RWPE1 (cell line): ENCODE measurements at regions of chr5 and their contacts with region 1.

Region 1: GRCh38 chr5:59673438-59674058 is 220.0 kb downstream of the PDE4D start:
- DNase-seq: peak; percentile 48
- H3K27ac ChIP-seq: no peak overlapping the region
- CTCF ChIP-seq: peak; percentile 93

Region 2: DNA sequence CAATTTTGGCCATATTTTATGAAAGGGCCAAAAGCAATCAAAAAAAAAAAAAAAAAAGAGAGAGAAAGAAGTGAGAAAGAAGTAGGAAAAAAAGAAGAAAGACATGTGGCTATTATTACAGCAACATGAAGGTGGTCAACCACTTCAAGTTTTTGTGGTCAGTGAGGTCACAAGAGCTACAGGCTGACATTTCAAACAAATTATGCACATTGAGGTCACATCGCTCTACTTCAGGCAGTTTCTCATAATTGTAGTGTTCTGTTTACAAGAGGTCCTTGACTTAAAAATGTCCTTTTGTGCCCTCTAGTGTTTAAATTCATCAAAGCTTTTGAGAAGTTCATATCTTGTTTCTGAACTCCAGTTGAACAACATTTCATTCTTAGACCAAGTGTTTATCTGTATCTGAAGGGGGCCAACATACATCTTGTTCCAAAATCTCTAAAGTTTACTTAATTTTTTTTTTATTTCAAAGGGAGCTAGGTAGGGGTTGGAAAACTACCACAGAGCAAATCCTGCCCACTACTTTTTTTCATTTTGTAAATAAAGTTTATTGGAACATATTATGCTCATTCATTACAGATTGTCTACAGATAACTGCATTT is 293.1 kb before region 1 on chr5:
- CTCF ChIA-PET with region 1: interaction called, 12 read pairs
- POLR2A ChIA-PET with region 1: no interaction called
- DNase-seq: peak; percentile 42
- H3K27ac ChIP-seq: no peak overlapping the region
- CTCF ChIP-seq: peak; percentile 71

Region 3: DNA sequence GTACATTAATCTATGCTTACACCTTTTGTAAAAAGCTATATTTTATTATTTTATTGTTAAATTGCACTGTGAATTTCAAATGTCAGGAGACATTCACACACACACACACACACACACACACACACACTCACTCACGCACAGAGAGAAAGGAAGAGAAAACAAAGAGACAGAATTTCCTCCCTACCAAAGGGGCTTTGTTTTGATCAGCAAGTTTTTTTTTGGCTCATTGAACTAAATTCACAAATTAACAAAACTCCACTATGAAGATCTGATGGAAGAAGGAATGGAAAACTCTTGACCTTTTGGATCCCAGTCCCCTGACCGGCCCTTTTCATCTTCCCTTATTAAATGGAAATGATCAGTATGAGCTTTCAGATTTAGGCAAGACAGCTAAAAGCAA is 58.8 kb after region 1 on chr5:
- CTCF ChIA-PET with region 1: no interaction called
- POLR2A ChIA-PET with region 1: no interaction called
- DNase-seq: no peak
- H3K27ac ChIP-seq: no peak overlapping the region
- CTCF ChIP-seq: no peak

Region 4: DNA sequence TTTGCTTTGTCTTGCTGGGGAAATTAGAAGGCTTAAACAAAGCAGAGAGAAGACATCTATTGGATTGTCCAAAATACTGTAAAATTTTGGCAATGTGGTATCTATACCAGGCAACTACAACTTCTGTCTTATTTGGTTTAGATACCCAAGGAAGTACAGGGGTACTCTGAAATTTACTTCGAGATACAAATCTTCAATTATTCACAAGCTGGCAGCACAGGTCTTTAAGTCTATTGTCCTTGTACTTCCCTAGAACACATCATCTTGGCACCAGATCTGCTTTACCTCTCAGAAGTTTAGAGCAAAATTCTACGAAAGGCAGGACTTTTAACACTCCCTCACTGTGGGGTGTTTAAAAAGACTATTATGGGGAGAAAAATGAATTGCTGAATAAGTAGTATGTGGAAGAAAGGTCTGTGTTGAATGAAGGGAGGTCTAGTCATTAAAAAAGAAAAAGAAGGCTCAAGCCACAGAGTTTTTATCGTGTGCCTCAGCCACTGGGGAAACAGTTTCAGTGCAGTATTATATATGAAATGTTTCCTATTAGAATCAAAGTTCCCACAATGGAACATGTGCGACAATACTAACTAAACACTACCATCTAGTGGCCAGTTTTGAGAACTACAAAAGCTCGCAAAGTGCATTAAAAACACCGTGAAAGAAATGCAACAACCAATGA is 126.3 kb after region 1 on chr5:
- CTCF ChIA-PET with region 1: interaction called, 10 read pairs
- POLR2A ChIA-PET with region 1: no interaction called
- DNase-seq: peak; percentile 54
- H3K27ac ChIP-seq: no peak overlapping the region
- CTCF ChIP-seq: peak; percentile 79